ENCODE measurements at regions of chr11 and their contacts with region 1.

Region 1: GRCh38 chr11:75388386-75389275 is 10.7 kb upstream of the RPS3 start:
- DNase-seq: peak; percentile 74 to 75
- H3K4me3 ChIP-seq: no peak overlapping the region
- H3K27ac ChIP-seq: no peak overlapping the region
- H3K4me1 ChIP-seq: peaks cover 45% of the 10 kb centered on the region
- H3K27me3 ChIP-seq: no peaks in the 10 kb centered on the region
- CTCF ChIP-seq: peak; percentile 91

Region 2: DNA sequence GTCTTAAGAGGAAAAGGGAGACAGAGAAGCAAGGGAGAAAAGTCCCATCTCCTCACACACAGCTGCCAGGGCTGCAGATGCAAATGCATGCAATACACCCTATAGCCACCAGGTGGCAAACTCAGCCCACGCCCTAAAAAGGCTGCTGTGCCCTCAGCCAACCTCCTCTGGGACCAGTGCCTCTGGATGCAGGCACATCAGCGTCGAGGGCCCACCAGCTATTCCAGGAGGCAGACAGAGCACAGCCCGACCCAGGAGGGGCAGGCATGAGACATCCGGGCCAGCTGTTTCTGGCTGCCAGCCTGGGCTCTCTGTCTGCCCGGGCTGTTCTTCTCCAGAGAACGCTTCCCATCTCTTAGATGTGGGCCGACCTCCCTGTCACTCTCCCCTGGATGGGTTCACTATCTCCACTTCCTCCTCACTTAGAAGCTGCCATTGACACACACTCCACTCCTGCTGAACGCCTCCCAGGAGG is 108.4 kb before region 1 on chr11:
- CTCF ChIA-PET with region 1: interaction called, 6 read pairs
- POLR2A ChIA-PET with region 1: no interaction called
- intact Hi-C with region 1: loop called (anchors 1 kb)
- DNase-seq: peak; percentile 48 to 73
- H3K4me3 ChIP-seq: no peak overlapping the region
- H3K27ac ChIP-seq: no peak overlapping the region
- H3K4me1 ChIP-seq: no peaks in the 10 kb centered on the region
- H3K27me3 ChIP-seq: no peaks in the 10 kb centered on the region
- CTCF ChIP-seq: peak; percentile 98

Region 3: DNA sequence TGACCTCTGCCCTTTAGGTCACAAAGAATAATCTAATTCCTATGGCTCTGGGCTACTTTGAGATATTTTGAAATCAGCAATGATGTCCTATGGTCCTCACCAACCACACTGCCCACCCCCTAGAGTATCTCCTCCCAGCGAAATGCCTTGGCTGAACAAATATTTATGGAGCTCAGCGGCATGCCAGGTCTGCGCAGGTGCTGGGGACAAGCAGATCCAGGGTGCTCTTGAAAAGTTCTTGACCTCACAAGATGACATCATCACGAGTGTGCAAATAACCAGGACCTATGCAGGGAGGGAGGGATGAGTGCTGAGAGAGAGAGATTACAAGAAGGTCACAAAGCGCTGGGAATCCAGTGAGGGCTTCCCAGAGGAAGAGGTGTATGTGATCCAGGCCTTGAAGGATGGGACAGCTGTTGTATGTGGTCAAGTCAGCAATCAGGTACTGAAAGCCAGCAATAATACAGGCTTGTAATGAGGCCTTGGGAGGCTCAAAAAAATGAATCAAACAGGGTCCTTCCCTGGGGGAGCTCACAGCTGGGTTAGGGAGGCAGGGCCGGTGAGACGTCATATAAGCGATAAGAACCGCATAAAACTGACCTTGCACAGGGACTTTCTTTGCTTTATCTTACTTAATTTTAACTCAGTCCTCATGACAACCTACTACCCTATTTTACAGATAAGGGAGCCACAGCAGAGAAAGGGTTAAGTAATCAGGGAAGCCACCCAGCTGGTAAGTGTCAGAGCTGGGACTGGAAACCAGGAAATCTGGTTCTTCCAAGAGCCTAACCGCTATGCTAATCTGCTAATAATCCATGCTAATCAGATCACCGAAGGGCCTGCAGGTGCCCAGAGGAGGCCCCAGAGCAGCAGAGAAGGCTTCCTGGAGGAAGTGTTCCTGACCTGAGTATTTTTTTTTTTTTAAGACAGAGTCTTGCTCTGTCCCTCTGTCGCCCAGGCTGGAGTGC is 45.4 kb before region 1 on chr11:
- CTCF ChIA-PET with region 1: interaction called, 4 read pairs
- POLR2A ChIA-PET with region 1: interaction called, 3 read pairs
- intact Hi-C with region 1: loop called (anchors 5 kb)
- DNase-seq: peak in 1 of 2 experiments; percentile 83
- H3K4me3 ChIP-seq: no peak overlapping the region
- H3K27ac ChIP-seq: no peak overlapping the region
- H3K4me1 ChIP-seq: peaks cover 93% of the 10 kb centered on the region
- H3K27me3 ChIP-seq: no peaks in the 10 kb centered on the region
- CTCF ChIP-seq: no peak

Region 4: GRCh38 chr11:75408852-75409219 is 20.2 kb after region 1 on chr11:
- CTCF ChIA-PET with region 1: no interaction called
- POLR2A ChIA-PET with region 1: no interaction called
- intact Hi-C with region 1: no loop called
- DNase-seq: no peak
- H3K4me3 ChIP-seq: no peak overlapping the region
- H3K27ac ChIP-seq: no peak overlapping the region
- H3K4me1 ChIP-seq: peaks cover 4% of the 10 kb centered on the region; the same call in 1 of the 2 replicates
- H3K27me3 ChIP-seq: no peaks in the 10 kb centered on the region
- CTCF ChIP-seq: no peak

Region 5: GRCh38 chr11:75445315-75445953 is 56.8 kb after region 1 on chr11:
- CTCF ChIA-PET with region 1: no interaction called
- POLR2A ChIA-PET with region 1: no interaction called
- intact Hi-C with region 1: loop called (anchors 5 kb)
- DNase-seq: peak in 1 of 2 experiments; percentile 74
- H3K4me3 ChIP-seq: no peak overlapping the region
- H3K27ac ChIP-seq: no peak overlapping the region
- H3K4me1 ChIP-seq: no peaks in the 10 kb centered on the region
- H3K27me3 ChIP-seq: no peaks in the 10 kb centered on the region; the same call in 1 of the 2 replicates
- CTCF ChIP-seq: peak; percentile 100

Region 6: GRCh38 chr11:75762096-75762495 is 373.5 kb after region 1 on chr11:
- CTCF ChIA-PET with region 1: no interaction called
- POLR2A ChIA-PET with region 1: interaction called, 11 read pairs
- intact Hi-C with region 1: no loop called
- DNase-seq: no peak
- H3K4me3 ChIP-seq: no peak overlapping the region
- H3K27ac ChIP-seq: no peak overlapping the region
- H3K4me1 ChIP-seq: peaks cover 45% of the 10 kb centered on the region
- H3K27me3 ChIP-seq: no peaks in the 10 kb centered on the region
- CTCF ChIP-seq: no peak